GM12878 (cell line): ENCODE measurements at regions of chr18 and their contacts with region 1.

Region 1: GRCh38 chr18:59353079-59353680 is 5.9 kb downstream of the LMAN1 start:
- DNase-seq: no peak
- ATAC-seq: no peak
- H3K4me3 ChIP-seq: no peak overlapping the region
- H3K27ac ChIP-seq: no peak overlapping the region
- H3K4me1 ChIP-seq: peaks cover 8% of the 10 kb centered on the region
- H3K27me3 ChIP-seq: no peaks in the 10 kb centered on the region
- CTCF ChIP-seq: no peak
- EP300 ChIP-seq: no peak
- POLR2A ChIP-seq: no peak
- RAD21 ChIP-seq: no peak

Region 2: GRCh38 chr18:59200787-59201186 is 152.4 kb before region 1 on chr18:
- CTCF ChIA-PET with region 1: no interaction called
- POLR2A ChIA-PET with region 1: no interaction called
- RAD21 ChIA-PET with region 1: no interaction called
- SMC1A ChIA-PET with region 1: no interaction called
- in situ Hi-C with region 1: no loop called
- intact Hi-C with region 1: no loop called
- DNase-seq: no peak
- ATAC-seq: no peak
- H3K4me3 ChIP-seq: no peak overlapping the region
- H3K27ac ChIP-seq: no peak overlapping the region
- H3K4me1 ChIP-seq: no peaks in the 10 kb centered on the region
- H3K27me3 ChIP-seq: peaks cover 0 to 3% of the 10 kb centered on the region in 2 experiments; a peak in 2 of 4 replicates
- CTCF ChIP-seq: no peak
- EP300 ChIP-seq: no peak
- POLR2A ChIP-seq: no peak
- RAD21 ChIP-seq: no peak

Region 3: DNA sequence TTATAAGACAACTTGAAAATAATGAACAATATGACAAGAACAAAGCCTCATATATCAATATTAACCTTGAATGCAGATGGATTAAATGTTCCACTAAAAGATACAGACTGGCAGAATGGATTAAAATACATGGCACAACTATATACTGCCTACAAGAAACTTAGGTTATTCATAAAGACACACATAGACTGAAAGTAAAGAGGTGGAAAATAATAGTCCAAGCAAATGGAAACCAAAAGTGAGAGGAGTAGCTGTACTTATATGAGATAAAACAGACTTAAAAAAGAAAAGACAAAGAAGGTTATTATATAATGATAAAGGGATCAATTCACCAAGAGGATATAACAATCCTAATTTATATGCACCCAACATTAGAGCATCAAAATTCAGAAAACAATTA is 12.4 kb before region 1 on chr18:
- CTCF ChIA-PET with region 1: interaction called, 3 read pairs
- POLR2A ChIA-PET with region 1: interaction called, 3 read pairs
- RAD21 ChIA-PET with region 1: no interaction called
- SMC1A ChIA-PET with region 1: interaction called, 16 read pairs
- in situ Hi-C with region 1: no loop called
- intact Hi-C with region 1: no loop called
- DNase-seq: no peak
- ATAC-seq: peak; percentile 56
- H3K4me3 ChIP-seq: no peak overlapping the region
- H3K27ac ChIP-seq: no peak overlapping the region
- H3K4me1 ChIP-seq: no peaks in the 10 kb centered on the region; the same call in 1 of the 2 replicates
- H3K27me3 ChIP-seq: no peaks in the 10 kb centered on the region
- CTCF ChIP-seq: no peak
- EP300 ChIP-seq: no peak
- POLR2A ChIP-seq: no peak
- RAD21 ChIP-seq: no peak

Region 4: GRCh38 chr18:59423259-59423658 is 70.1 kb after region 1 on chr18:
- CTCF ChIA-PET with region 1: no interaction called
- POLR2A ChIA-PET with region 1: no interaction called
- RAD21 ChIA-PET with region 1: no interaction called
- SMC1A ChIA-PET with region 1: no interaction called
- in situ Hi-C with region 1: no loop called
- intact Hi-C with region 1: no loop called
- DNase-seq: no peak
- ATAC-seq: no peak
- H3K4me3 ChIP-seq: no peak overlapping the region
- H3K27ac ChIP-seq: no peak overlapping the region
- H3K4me1 ChIP-seq: no peaks in the 10 kb centered on the region
- H3K27me3 ChIP-seq: peaks cover 0 to 2% of the 10 kb centered on the region in 2 experiments; a peak in 3 of 4 replicates
- CTCF ChIP-seq: no peak
- EP300 ChIP-seq: no peak
- POLR2A ChIP-seq: no peak
- RAD21 ChIP-seq: no peak